ENCODE measurements at regions of chr14 and their contacts with region 1.

Region 1: GRCh38 chr14:20343092-20343861 is at the start of gene PARP2:
- DNase-seq: peak; percentile 93 to 96 (median 93)
- H3K4me3 ChIP-seq: peak within 1 kb of the TSS; percentile 67 to 71
- H3K4me3 Mint-ChIP-seq: peak within 1 kb of the TSS; percentile 92 to 99 (median 98)
- H3K27ac ChIP-seq: peak within 1 kb of the TSS; percentile 94
- H3K27ac Mint-ChIP-seq: peak within 1 kb of the TSS; percentile 97 to 100 (median 98)
- H3K4me1 ChIP-seq: peaks cover 7% of the 10 kb centered on the region
- H3K4me1 Mint-ChIP-seq: peaks cover 5 to 27% (median 10%) of the 10 kb centered on the region in 4 donors
- H3K27me3 ChIP-seq: no peaks in the 10 kb centered on the region
- H3K27me3 Mint-ChIP-seq: no peaks in the 10 kb centered on the region
- total RNA-seq, gene PARP2: 20.3 to 25.0 TPM

Region 2: GRCh38 chr14:20327005-20327869 is 16.0 kb before region 1 on chr14:
- CTCF ChIA-PET with region 1: interaction called, 124 read pairs
- POLR2A ChIA-PET with region 1: interaction called, 70 read pairs
- intact Hi-C with region 1: loop called (anchors 1 kb)
- DNase-seq: peak in 4 of 5 donors; percentile 65 to 68 (median 66)
- H3K4me3 ChIP-seq: no peak overlapping the region
- H3K4me3 Mint-ChIP-seq: peak overlapping the region in 3 of 8 donors; percentile 17 to 50 (median 45)
- H3K27ac ChIP-seq: peak overlapping the region; percentile 17
- H3K27ac Mint-ChIP-seq: peak overlapping the region; percentile 24 to 92 (median 77)
- H3K4me1 ChIP-seq: peaks cover 10% of the 10 kb centered on the region
- H3K4me1 Mint-ChIP-seq: peaks cover 15 to 35% (median 22%) of the 10 kb centered on the region in 4 donors
- H3K27me3 ChIP-seq: no peaks in the 10 kb centered on the region
- H3K27me3 Mint-ChIP-seq: no peaks in the 10 kb centered on the region

Region 3: GRCh38 chr14:20356422-20356821 is 13.1 kb after region 1 on chr14:
- CTCF ChIA-PET with region 1: interaction called, 4 read pairs
- POLR2A ChIA-PET with region 1: interaction called, 25 read pairs
- intact Hi-C with region 1: no loop called
- DNase-seq: no peak
- H3K4me3 ChIP-seq: no peak overlapping the region
- H3K4me3 Mint-ChIP-seq: no peak overlapping the region
- H3K27ac ChIP-seq: no peak overlapping the region
- H3K27ac Mint-ChIP-seq: peak overlapping the region in 1 of 7 donors; percentile 67
- H3K4me1 ChIP-seq: no peaks in the 10 kb centered on the region
- H3K4me1 Mint-ChIP-seq: peaks cover 0 to 6% (median under 1%) of the 10 kb centered on the region in 4 donors
- H3K27me3 ChIP-seq: no peaks in the 10 kb centered on the region
- H3K27me3 Mint-ChIP-seq: no peaks in the 10 kb centered on the region

Region 4: DNA sequence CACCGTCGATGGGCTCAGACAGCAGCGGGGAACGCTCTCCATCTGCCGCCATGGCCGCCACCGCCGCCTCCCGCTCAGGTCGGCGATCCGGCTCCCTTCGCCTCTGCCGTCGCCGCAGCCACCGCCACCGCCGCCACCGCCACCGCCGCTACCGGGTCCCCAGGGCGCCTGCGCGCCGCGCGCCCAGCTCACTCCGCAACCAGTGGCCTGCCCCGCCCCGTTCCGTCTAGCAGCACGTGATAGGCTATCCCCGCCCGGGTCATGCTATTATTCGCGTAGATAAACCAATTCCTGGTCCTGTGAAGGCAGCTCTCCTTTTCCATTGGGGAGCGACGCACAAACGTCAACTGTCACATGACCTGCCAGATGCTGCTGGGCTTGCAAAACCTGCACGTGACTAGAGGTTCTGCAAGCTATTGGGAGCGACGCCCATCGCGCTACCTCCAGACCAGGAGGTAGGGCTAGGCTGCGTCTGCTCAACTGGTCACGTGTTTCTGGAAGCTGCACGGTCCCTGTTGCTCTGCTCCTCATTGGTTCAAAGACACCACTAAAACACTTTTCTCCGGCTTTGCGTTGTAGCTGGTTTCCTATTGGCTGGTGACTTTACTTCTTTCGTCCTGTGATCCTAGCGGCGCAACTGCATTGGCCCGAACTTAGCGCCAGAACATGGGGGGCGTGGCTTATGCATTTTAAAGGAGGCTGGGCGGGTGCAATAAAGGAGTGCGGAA is 118.2 kb after region 1 on chr14 and contains the start of gene PIP4P1:
- CTCF ChIA-PET with region 1: interaction called, 5 read pairs
- POLR2A ChIA-PET with region 1: interaction called, 51 read pairs
- intact Hi-C with region 1: loop called (anchors 1 kb)
- DNase-seq: peak; percentile 98 to 100 (median 99)
- H3K4me3 ChIP-seq: peak within 1 kb of the TSS; percentile 64 to 76
- H3K4me3 Mint-ChIP-seq: peak within 1 kb of the TSS; percentile 89 to 96 (median 92)
- H3K27ac ChIP-seq: peak within 1 kb of the TSS; percentile 86
- H3K27ac Mint-ChIP-seq: peak within 1 kb of the TSS; percentile 92 to 99 (median 97)
- H3K4me1 ChIP-seq: peaks cover 39% of the 10 kb centered on the region
- H3K4me1 Mint-ChIP-seq: peaks cover 19 to 35% (median 23%) of the 10 kb centered on the region in 4 donors
- H3K27me3 ChIP-seq: no peaks in the 10 kb centered on the region
- H3K27me3 Mint-ChIP-seq: no peaks in the 10 kb centered on the region
- total RNA-seq, gene PIP4P1: 77.8 to 78.1 TPM

Region 5: DNA sequence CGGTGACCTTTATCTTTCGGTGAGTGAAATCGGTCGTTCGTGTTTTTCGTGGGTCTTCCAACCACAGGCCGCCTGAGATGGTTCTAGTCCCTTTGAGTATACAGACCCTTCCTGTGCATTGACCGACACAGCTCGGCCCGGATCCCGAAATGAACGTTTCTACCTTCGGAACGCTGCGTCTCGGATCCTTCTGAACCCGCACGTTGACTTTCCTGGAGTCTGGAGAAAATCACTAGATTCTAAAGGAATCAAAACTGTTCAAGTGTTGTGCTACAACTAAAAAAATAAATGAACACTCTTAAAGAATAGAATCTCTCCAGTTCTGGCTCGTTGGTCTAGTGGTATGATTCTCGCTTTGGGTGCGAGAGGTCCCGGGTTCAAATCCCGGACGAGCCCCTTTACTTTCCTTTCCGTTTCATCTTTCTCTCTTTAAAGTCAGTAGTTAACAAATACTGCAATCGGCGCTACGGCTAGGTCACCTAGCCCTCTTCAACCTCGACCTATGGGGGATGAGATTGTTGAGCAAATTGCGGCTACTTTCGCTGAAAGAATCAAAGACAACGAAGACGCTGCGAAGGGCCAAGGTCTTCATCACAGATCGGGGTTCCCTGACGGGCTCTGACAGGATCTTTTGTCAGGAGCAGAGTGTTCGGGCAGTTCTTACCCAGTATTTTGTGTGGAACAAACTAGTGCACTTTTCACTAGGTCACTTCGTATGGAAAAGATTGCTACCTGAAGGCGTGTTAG is 289.6 kb after region 1 on chr14:
- CTCF ChIA-PET with region 1: no interaction called
- POLR2A ChIA-PET with region 1: interaction called, 8 read pairs
- intact Hi-C with region 1: loop called (anchors 1 kb)
- DNase-seq: peak; percentile 55 to 77 (median 71)
- H3K4me3 ChIP-seq: peak overlapping the region; percentile 34 to 51
- H3K4me3 Mint-ChIP-seq: peak overlapping the region; percentile 82 to 93 (median 90)
- H3K27ac ChIP-seq: no peak overlapping the region
- H3K27ac Mint-ChIP-seq: peak overlapping the region in 6 of 7 donors; percentile 79 to 99 (median 88)
- H3K4me1 ChIP-seq: peaks cover 37% of the 10 kb centered on the region
- H3K4me1 Mint-ChIP-seq: peaks cover 34 to 55% (median 45%) of the 10 kb centered on the region in 4 donors
- H3K27me3 ChIP-seq: peaks cover 20% of the 10 kb centered on the region
- H3K27me3 Mint-ChIP-seq: peaks cover 24 to 28% of the 10 kb centered on the region in 2 donors

Region 6: GRCh38 chr14:21103710-21104447 is 760.6 kb after region 1 on chr14:
- CTCF ChIA-PET with region 1: no interaction called
- POLR2A ChIA-PET with region 1: no interaction called
- intact Hi-C with region 1: loop called (anchors 2 kb)
- DNase-seq: peak; percentile 92 to 95 (median 95)
- H3K4me3 ChIP-seq: peak overlapping the region; percentile 96
- H3K4me3 Mint-ChIP-seq: peak overlapping the region; percentile 85 to 94 (median 90)
- H3K27ac ChIP-seq: peak overlapping the region; percentile 90
- H3K27ac Mint-ChIP-seq: peak overlapping the region; percentile 91 to 99 (median 97)
- H3K4me1 ChIP-seq: peaks cover 29% of the 10 kb centered on the region
- H3K4me1 Mint-ChIP-seq: peaks cover 15 to 40% (median 23%) of the 10 kb centered on the region in 4 donors
- H3K27me3 ChIP-seq: no peaks in the 10 kb centered on the region
- H3K27me3 Mint-ChIP-seq: no peaks in the 10 kb centered on the region